OCI-LY7 (cell line): ENCODE measurements at regions of chr17 and their contacts with region 1.

Region 1: GRCh38 chr17:2054512-2055291 is at the start of gene HIC1:
- DNase-seq: peak; percentile 78
- H3K4me3 ChIP-seq: peak within 1 kb of the TSS; percentile 68
- H3K27ac ChIP-seq: no peak within 1 kb of the TSS
- H3K4me1 ChIP-seq: peaks cover 41% of the 10 kb centered on the region
- CTCF ChIP-seq: peak; percentile 84
- total RNA-seq, gene HIC1: 0.19 TPM in 1 of 2 replicates, not detected in the other

Region 2: GRCh38 chr17:2170023-2170422 is 115.3 kb after region 1 on chr17:
- CTCF ChIA-PET with region 1: no interaction called
- POLR2A ChIA-PET with region 1: no interaction called
- intact Hi-C with region 1: loop called (anchors 2 kb)
- DNase-seq: peak; percentile 43
- H3K4me3 ChIP-seq: no peak overlapping the region
- H3K27ac ChIP-seq: no peak overlapping the region
- H3K4me1 ChIP-seq: no peaks in the 10 kb centered on the region
- CTCF ChIP-seq: peak; percentile 72

Region 3: GRCh38 chr17:2244545-2245525 is 190.1 kb after region 1 on chr17:
- CTCF ChIA-PET with region 1: interaction called, 9 read pairs
- POLR2A ChIA-PET with region 1: no interaction called
- intact Hi-C with region 1: loop called (anchors 1 kb)
- DNase-seq: peak; percentile 84
- H3K4me3 ChIP-seq: no peak overlapping the region
- H3K27ac ChIP-seq: no peak overlapping the region
- H3K4me1 ChIP-seq: peaks cover 14% of the 10 kb centered on the region
- CTCF ChIP-seq: peak; percentile 99

Region 4: GRCh38 chr17:2282297-2282873 is 227.7 kb after region 1 on chr17:
- CTCF ChIA-PET with region 1: no interaction called
- POLR2A ChIA-PET with region 1: interaction called, 4 read pairs
- intact Hi-C with region 1: loop called (anchors 1 kb)
- DNase-seq: peak; percentile 72
- H3K4me3 ChIP-seq: no peak overlapping the region
- H3K27ac ChIP-seq: no peak overlapping the region
- H3K4me1 ChIP-seq: no peaks in the 10 kb centered on the region
- CTCF ChIP-seq: peak; percentile 82

Region 5: GRCh38 chr17:2336215-2336851 is 281.6 kb after region 1 on chr17 and contains the start of gene TSR1:
- CTCF ChIA-PET with region 1: no interaction called
- POLR2A ChIA-PET with region 1: no interaction called
- intact Hi-C with region 1: loop called (anchors 5 kb)
- DNase-seq: peak; percentile 93
- H3K4me3 ChIP-seq: peak within 1 kb of the TSS; percentile 95
- H3K27ac ChIP-seq: peak within 1 kb of the TSS; percentile 78
- H3K4me1 ChIP-seq: peaks cover 32% of the 10 kb centered on the region
- CTCF ChIP-seq: peak; percentile 48; the same call in 1 of the 2 replicates
- total RNA-seq, gene TSR1: 71.4 and 85.8 TPM in 2 replicates